ENCODE measurements at regions of chr17 and their contacts with region 1.

Region 1: GRCh38 chr17:58085039-58085728 is 2.0 kb downstream of the DYNLL2 start:
- DNase-seq: no peak
- ATAC-seq: no peak

Region 2: DNA sequence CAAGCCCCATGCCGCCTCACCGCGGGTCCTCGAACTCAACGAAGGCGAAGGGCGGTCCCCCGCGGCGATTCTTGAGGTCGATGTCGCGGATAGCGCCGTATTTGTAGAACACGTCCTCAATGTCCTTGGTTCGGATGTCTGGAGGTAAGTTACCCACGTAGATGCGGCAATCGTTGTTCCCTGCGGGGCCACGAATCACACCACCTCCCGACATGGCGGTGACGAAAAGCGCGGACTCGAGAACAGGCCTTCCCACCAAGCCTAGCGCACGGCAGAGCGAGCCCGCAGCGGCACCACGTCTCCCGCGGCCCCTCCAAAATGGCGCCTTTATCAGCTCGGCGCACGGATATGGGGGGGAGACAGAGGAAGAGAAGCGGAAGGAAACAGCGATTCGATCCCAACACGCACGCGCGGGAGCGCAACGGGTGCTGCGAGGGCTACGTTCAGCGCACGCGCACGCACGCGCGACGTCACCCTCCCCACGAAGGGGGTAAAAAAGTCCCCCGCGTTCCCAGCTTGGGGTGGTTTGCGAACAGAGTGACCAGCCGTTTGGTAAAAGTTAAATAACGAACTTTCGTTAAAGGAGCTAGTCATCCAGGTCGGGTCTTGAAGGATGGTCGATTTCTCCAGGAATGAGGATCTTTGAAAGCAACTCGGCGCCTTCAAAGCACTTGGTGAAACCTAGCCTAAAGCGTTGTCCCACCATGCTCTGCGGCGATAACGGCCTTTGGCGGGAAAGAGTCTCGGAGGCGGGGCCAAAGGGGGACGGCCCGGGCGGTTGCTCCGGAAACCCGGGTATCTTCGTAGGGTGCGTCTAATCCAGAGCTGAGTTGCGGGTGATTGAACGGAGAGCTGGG is 78.0 kb before region 1 on chr17 and contains the start of gene SRSF1:
- intact Hi-C with region 1: loop called in 1 of 2 experiments (anchors 5 kb)
- DNase-seq: peak; percentile 98
- ATAC-seq: peak; percentile 96
- total RNA-seq, gene SRSF1: 113 to 137 TPM

Region 3: GRCh38 chr17:58112970-58113631 is 27.9 kb after region 1 on chr17:
- intact Hi-C with region 1: no loop called
- DNase-seq: peak; percentile 79
- ATAC-seq: peak; percentile 78 to 87

Region 4: DNA sequence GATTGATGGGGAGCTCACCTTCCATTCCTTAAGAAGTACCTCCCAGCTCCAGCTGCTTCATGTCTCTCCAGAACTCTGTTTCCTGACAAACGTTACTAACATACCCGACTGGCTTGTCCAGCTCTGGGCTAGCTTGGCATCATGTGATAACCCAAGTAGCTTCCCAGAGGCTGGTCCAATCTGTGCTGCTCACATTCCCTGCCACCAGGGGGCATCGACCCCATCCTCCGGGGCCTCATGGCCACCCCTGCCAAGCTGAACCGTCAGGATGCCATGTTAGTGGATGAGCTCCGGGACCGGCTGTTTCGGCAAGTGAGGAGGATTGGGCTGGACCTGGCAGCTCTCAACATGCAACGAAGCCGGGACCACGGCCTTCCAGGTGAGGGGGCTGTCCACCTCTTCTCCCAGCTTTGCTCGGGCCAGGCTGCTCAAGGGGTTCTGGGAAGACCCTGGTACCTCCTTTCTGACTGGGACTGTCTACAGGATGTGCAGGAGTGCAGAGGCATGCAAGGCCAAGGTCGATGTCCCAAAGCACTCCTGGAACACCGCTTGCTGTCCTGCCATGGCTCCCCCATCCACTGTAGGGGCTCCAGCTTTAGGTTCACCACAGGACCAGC is 114.9 kb after region 1 on chr17:
- intact Hi-C with region 1: no loop called
- DNase-seq: peak; percentile 46
- ATAC-seq: peak; percentile 47 to 64

Measured in left cardiac atrium (tissue), 4 donors.